Heart right ventricle (tissue), 16 donors: ENCODE measurements at regions of chr2 and their contacts with region 1.

Region 1: GRCh38 chr2:187138265-187138664 is 289.3 kb upstream of the ZSWIM2 start:
- DNase-seq: peak; percentile 33 to 49
- ATAC-seq: peak in 6 of 8 donors; percentile 51 to 77 (median 62)
- H3K4me3 ChIP-seq: no peak overlapping the region
- H3K27ac ChIP-seq: peak overlapping the region in 2 of 10 donors; percentile 3 to 5
- H3K4me1 ChIP-seq: peaks cover 0 to 11% (median 0%) of the 10 kb centered on the region in 9 donors
- H3K27me3 ChIP-seq: no peaks in the 10 kb centered on the region
- CTCF ChIP-seq: peak in 8 of 9 donors; percentile 6 to 62 (median 47)

Region 2: DNA sequence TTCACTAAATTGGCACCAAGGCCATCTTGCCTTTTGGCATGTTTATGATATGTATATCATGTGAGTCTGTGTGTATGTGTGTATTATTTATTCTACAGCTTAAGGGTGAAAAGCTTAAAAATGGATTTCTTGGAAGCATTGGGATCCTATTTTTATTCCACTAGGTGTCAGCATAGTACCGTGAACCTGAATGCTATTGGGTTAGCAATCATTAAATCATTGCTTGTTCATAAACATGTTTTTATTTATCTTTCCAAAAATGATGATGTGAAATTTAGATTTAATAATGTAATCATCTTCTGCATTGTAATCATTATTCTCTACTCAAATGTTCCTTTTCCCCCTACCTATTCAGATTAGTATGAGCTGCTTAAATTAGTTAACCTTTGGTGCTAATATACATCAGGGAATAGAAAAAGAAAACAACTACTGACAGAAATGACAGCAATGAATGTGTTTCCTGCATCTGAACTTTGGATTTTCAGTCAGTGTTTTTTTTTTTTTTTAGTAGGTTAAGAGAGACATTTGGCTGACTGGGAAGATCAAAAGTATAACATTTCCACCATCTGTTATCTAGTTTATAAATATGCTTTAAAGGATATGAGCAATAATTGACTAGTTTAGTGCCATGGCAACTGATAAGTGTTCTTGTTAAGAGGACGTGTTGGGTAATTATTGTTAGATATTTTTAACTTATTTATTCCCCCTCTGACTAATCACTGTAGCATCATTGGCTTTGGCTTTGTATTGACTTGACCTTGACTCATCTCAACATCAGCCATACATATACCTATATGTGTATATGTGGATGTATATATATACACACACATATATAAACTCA is 275.2 kb before region 1 on chr2:
- intact Hi-C with region 1: loop called in 3 of 10 experiments (anchors 10 kb)
- DNase-seq: no peak
- ATAC-seq: peak in 6 of 8 donors; percentile 44 to 75 (median 60)
- H3K4me3 ChIP-seq: no peak overlapping the region
- H3K27ac ChIP-seq: peak overlapping the region in 2 of 10 donors; percentile 22 to 59
- H3K4me1 ChIP-seq: peaks cover 0 to 13% (median 5%) of the 10 kb centered on the region in 9 donors
- H3K27me3 ChIP-seq: no peaks in the 10 kb centered on the region
- CTCF ChIP-seq: peak; percentile 64 to 90 (median 72)

Region 3: GRCh38 chr2:186887107-186888090 is 250.9 kb before region 1 on chr2:
- intact Hi-C with region 1: loop called in 1 of 10 experiments (anchors 10 kb)
- DNase-seq: peak; percentile 17 to 50
- ATAC-seq: peak; percentile 85 to 94 (median 90)
- H3K4me3 ChIP-seq: no peak overlapping the region
- H3K27ac ChIP-seq: peak overlapping the region in 8 of 10 donors; percentile 11 to 69 (median 46)
- H3K4me1 ChIP-seq: peaks cover 2 to 42% (median 24%) of the 10 kb centered on the region in 9 donors
- H3K27me3 ChIP-seq: no peaks in the 10 kb centered on the region
- CTCF ChIP-seq: no peak

Region 4: GRCh38 chr2:187263675-187264560 is 125.7 kb after region 1 on chr2:
- intact Hi-C with region 1: no loop called
- DNase-seq: no peak
- ATAC-seq: no peak
- H3K4me3 ChIP-seq: no peak overlapping the region
- H3K27ac ChIP-seq: no peak overlapping the region
- H3K4me1 ChIP-seq: peaks cover 0 to 8% (median 0%) of the 10 kb centered on the region in 9 donors
- H3K27me3 ChIP-seq: no peaks in the 10 kb centered on the region
- CTCF ChIP-seq: no peak

Region 5: GRCh38 chr2:187299122-187299906 is 161.0 kb after region 1 on chr2:
- intact Hi-C with region 1: loop called in 1 of 10 experiments (anchors 10 kb)
- DNase-seq: no peak
- ATAC-seq: no peak
- H3K4me3 ChIP-seq: no peak overlapping the region
- H3K27ac ChIP-seq: peak overlapping the region in 2 of 10 donors; percentile 13 to 33
- H3K4me1 ChIP-seq: peaks cover 0 to 35% (median 6%) of the 10 kb centered on the region in 9 donors
- H3K27me3 ChIP-seq: no peaks in the 10 kb centered on the region
- CTCF ChIP-seq: peak in 7 of 9 donors; percentile 32 to 65 (median 44)

Region 6: DNA sequence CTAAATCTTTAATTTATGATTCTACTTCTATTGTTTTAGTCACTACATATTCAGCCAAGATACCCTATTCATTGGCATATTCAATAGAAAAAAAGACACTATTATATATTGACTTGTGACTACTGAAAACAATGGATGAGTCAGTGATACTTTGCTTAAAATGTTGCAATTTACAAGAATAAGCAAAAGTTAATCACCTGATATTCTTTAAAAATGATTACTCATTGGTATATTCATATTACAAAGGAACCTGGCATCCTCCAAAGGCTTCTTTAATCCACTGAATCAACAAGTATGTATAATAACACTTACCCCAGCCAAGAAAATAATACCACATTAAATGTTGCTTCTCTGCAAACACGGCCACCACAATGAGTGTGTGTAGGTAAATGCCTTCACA is 222.0 kb after region 1 on chr2:
- intact Hi-C with region 1: no loop called
- DNase-seq: no peak
- ATAC-seq: no peak
- H3K4me3 ChIP-seq: no peak overlapping the region
- H3K27ac ChIP-seq: peak overlapping the region in 1 of 10 donors; percentile 6
- H3K4me1 ChIP-seq: peaks cover 0 to 11% (median 0%) of the 10 kb centered on the region in 9 donors
- H3K27me3 ChIP-seq: no peaks in the 10 kb centered on the region
- CTCF ChIP-seq: no peak

Region 7: GRCh38 chr2:187442378-187442777 is 304.1 kb after region 1 on chr2:
- intact Hi-C with region 1: loop called in 2 of 10 experiments (anchors 5 kb)
- DNase-seq: no peak
- ATAC-seq: no peak
- H3K4me3 ChIP-seq: peak overlapping the region in 5 of 10 donors; percentile 7 to 59 (median 58)
- H3K27ac ChIP-seq: peak overlapping the region in 2 of 10 donors; percentile 15 to 27
- H3K4me1 ChIP-seq: peaks cover 0 to 45% (median 13%) of the 10 kb centered on the region in 9 donors
- H3K27me3 ChIP-seq: no peaks in the 10 kb centered on the region
- CTCF ChIP-seq: peak in 3 of 9 donors; percentile 27 to 49 (median 30)